ENCODE measurements at regions of chr5 and their contacts with region 1.

Region 1: DNA sequence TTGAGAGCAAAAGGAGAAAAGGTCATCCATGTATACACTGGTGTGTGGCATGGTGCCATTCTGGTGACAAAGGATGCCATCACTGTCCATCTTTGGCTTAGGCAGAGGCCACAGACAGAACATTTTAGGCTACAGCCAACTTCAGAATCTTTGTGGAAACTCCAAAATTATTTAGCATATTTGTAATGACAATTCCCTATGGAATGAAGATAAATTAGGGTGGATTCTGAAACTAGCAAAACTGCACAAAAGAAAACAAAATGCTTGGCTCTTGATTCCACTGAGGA is 92.5 kb downstream of the FBXW11 start:
- H3K4me3 Mint-ChIP-seq: no peak overlapping the region
- H3K27ac Mint-ChIP-seq: peak overlapping the region; percentile 31
- H3K4me1 Mint-ChIP-seq: peaks cover 49% of the 10 kb centered on the region
- H3K27me3 Mint-ChIP-seq: no peaks in the 10 kb centered on the region

Region 2: GRCh38 chr5:171724468-171725204 is 189.3 kb before region 1 on chr5:
- intact Hi-C with region 1: no loop called
- H3K4me3 Mint-ChIP-seq: no peak overlapping the region
- H3K27ac Mint-ChIP-seq: no peak overlapping the region
- H3K4me1 Mint-ChIP-seq: no peaks in the 10 kb centered on the region
- H3K27me3 Mint-ChIP-seq: no peaks in the 10 kb centered on the region

Region 3: DNA sequence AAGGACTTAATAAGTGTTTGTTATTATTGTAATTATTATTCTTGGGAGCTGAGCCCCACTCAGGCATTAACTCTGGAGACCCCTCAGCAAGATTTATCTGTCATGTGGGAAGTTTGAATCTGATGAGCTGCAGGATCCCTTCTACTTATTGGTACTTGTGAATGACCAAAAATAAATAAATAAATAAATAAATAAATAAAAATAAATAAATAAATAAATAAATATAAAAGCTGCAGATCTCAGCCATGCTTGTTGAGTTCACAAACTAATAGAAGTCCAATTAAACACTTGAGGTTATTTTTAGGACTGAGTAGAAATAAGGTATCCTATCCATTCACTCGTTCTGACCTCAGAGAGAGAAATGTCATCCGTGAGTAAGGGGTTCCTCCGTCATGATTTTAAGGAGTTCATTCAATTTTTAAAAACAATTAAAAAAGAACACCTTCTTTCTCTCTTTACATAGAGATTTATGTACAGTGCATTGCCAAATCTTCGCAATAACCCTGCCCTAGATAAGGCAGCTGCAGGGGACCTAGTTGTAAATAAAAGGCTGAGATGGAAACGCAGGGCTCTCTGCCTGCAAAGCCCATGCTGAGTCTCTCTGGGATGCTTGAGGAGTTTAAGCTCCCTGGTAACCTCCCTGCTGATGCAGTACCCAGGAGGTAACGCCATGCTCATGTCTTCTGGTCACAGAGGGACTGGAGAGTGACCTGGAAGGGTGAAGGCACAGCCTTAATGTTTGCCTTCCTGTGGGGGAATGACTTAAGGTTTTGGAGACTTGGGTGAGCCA is 281.2 kb after region 1 on chr5:
- intact Hi-C with region 1: loop called (anchors 10 kb)
- H3K4me3 Mint-ChIP-seq: no peak overlapping the region
- H3K27ac Mint-ChIP-seq: no peak overlapping the region
- H3K4me1 Mint-ChIP-seq: peaks cover 18% of the 10 kb centered on the region
- H3K27me3 Mint-ChIP-seq: peaks cover 3% of the 10 kb centered on the region

Region 4: DNA sequence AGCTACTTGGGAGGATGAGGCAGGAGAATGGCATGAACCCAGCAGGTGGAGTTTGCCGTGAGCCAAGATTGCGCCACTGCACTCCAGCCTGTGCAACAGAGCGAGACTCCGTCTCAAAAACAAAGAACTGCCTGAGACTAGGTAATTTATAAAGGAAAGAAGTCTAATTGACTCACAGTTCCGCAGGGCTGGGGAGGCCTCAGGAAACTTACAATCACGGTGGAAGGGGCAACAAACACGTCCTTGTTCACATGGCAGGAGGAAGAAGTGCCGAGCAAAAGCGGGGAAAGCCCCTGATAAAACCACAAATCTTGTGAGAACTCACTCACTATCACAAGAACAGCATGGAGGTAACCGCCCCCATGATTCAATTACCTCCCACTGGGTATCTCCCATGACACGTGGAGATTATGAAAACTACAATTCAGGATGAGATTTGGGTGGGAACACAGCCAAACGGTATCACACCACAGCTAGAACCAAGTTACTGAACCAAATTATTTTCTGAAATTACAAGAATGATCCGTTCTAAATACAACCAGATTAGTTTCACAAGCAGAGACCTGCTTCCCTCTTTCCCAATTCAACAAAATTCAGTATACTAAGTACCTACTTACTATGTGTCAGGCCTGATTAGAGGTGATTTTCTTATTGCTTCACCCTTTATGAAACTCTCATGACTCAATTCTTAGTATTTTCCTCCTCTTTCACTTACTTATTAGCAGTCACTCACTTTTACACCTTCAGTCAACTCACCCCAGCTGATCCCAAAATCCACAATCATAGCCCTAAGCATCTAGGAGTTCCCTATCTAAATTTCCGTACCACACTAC is 361.2 kb after region 1 on chr5:
- intact Hi-C with region 1: loop called (anchors 10 kb)
- H3K4me3 Mint-ChIP-seq: no peak overlapping the region
- H3K27ac Mint-ChIP-seq: peak overlapping the region; percentile 8
- H3K4me1 Mint-ChIP-seq: peaks cover 55% of the 10 kb centered on the region
- H3K27me3 Mint-ChIP-seq: no peaks in the 10 kb centered on the region